ENCODE measurements at regions of chr5 and their contacts with region 1.

Region 1: GRCh38 chr5:149990518-149991376 is 9.7 kb downstream of the TIGD6 start:
- DNase-seq: peak; percentile 76 to 79
- ATAC-seq: peak; percentile 76
- H3K4me3 ChIP-seq: no peak overlapping the region
- H3K27ac ChIP-seq: no peak overlapping the region
- H3K4me1 ChIP-seq: peaks cover 8 to 11% of the 10 kb centered on the region in 2 donors
- H3K27me3 ChIP-seq: no peaks in the 10 kb centered on the region

Region 2: GRCh38 chr5:149834246-149834855 is 156.4 kb before region 1 on chr5:
- intact Hi-C with region 1: loop called (anchors 1 to 2 kb)
- DNase-seq: peak; percentile 58 to 61
- ATAC-seq: no peak
- H3K4me3 ChIP-seq: no peak overlapping the region
- H3K27ac ChIP-seq: no peak overlapping the region
- H3K4me1 ChIP-seq: no peaks in the 10 kb centered on the region
- H3K27me3 ChIP-seq: no peaks in the 10 kb centered on the region

Measured in aorta (tissue), 5 donors.